ENCODE measurements at regions of chr2 and their contacts with region 1.

Region 1: GRCh38 chr2:119702918-119703401 is 24.0 kb downstream of the TMEM177 start:
- DNase-seq: peak; percentile 80
- H3K4me3 Mint-ChIP-seq: no peak overlapping the region
- H3K27ac Mint-ChIP-seq: no peak overlapping the region
- H3K4me1 Mint-ChIP-seq: peaks cover 19% of the 10 kb centered on the region
- H3K27me3 Mint-ChIP-seq: no peaks in the 10 kb centered on the region

Region 2: GRCh38 chr2:119641562-119642258 is 61.2 kb before region 1 on chr2:
- CTCF ChIA-PET with region 1: interaction called, 4 read pairs
- POLR2A ChIA-PET with region 1: no interaction called
- intact Hi-C with region 1: loop called (anchors 5 kb)
- DNase-seq: peak; percentile 84
- H3K4me3 Mint-ChIP-seq: no peak overlapping the region
- H3K27ac Mint-ChIP-seq: no peak overlapping the region
- H3K4me1 Mint-ChIP-seq: no peaks in the 10 kb centered on the region
- H3K27me3 Mint-ChIP-seq: peaks cover 3% of the 10 kb centered on the region

Region 3: DNA sequence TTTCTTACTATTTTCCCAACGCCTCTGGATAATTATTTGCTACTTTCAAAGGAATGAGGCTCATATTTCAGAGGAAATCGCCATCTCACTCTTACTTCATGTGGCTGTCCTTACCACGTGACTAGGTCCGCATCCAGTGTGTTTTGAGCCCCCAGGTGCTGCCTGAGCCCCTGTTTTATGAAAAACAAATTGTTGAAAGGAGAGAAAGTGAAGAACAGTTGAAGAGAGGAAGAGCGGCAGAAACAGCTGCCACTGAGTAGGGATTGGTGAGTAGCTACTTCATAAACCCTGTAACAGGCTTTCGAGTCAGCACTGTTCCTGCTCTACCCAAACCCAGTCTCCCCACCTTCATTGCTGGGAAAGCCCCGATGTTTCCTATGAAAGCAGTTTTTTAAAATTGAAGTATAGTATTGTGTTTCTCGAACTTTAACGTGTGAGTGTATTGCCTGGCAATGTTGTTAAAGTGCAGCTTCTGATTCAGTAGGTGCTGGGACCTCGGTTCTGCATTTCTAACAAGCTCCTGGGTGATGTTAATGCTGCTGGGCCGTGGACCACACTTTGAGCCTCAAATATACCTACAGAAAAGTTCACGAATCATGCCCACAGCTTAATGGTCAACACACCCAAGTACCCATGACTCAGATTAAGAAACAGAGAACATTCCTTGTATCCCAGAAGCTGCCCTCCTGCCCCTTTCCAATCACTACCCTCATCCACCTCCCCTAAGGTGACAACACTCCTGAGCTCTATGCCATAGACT is 15.7 kb after region 1 on chr2:
- CTCF ChIA-PET with region 1: interaction called, 4 read pairs
- POLR2A ChIA-PET with region 1: interaction called, 5 read pairs
- intact Hi-C with region 1: loop called (anchors 1 kb)
- DNase-seq: peak; percentile 33
- H3K4me3 Mint-ChIP-seq: no peak overlapping the region
- H3K27ac Mint-ChIP-seq: peak overlapping the region; percentile 61
- H3K4me1 Mint-ChIP-seq: peaks cover 14% of the 10 kb centered on the region
- H3K27me3 Mint-ChIP-seq: no peaks in the 10 kb centered on the region

Region 4: GRCh38 chr2:119826370-119826961 is 123.5 kb after region 1 on chr2:
- CTCF ChIA-PET with region 1: interaction called, 73 read pairs
- POLR2A ChIA-PET with region 1: interaction called, 4 read pairs
- intact Hi-C with region 1: loop called (anchors 1 kb)
- DNase-seq: peak; percentile 57
- H3K4me3 Mint-ChIP-seq: no peak overlapping the region
- H3K27ac Mint-ChIP-seq: no peak overlapping the region
- H3K4me1 Mint-ChIP-seq: peaks cover 42% of the 10 kb centered on the region
- H3K27me3 Mint-ChIP-seq: no peaks in the 10 kb centered on the region

Region 5: GRCh38 chr2:120012771-120013596 is 310.0 kb after region 1 on chr2 and contains the start of gene EPB41L5:
- CTCF ChIA-PET with region 1: interaction called, 4 read pairs
- POLR2A ChIA-PET with region 1: no interaction called
- intact Hi-C with region 1: loop called (anchors 5 kb)
- DNase-seq: peak; percentile 87
- H3K4me3 Mint-ChIP-seq: peak within 1 kb of the TSS; percentile 73
- H3K27ac Mint-ChIP-seq: no peak within 1 kb of the TSS
- H3K4me1 Mint-ChIP-seq: peaks cover 10% of the 10 kb centered on the region
- H3K27me3 Mint-ChIP-seq: peaks cover 1% of the 10 kb centered on the region
- total RNA-seq, gene EPB41L5: 2.5 to 2.7 TPM

Region 6: DNA sequence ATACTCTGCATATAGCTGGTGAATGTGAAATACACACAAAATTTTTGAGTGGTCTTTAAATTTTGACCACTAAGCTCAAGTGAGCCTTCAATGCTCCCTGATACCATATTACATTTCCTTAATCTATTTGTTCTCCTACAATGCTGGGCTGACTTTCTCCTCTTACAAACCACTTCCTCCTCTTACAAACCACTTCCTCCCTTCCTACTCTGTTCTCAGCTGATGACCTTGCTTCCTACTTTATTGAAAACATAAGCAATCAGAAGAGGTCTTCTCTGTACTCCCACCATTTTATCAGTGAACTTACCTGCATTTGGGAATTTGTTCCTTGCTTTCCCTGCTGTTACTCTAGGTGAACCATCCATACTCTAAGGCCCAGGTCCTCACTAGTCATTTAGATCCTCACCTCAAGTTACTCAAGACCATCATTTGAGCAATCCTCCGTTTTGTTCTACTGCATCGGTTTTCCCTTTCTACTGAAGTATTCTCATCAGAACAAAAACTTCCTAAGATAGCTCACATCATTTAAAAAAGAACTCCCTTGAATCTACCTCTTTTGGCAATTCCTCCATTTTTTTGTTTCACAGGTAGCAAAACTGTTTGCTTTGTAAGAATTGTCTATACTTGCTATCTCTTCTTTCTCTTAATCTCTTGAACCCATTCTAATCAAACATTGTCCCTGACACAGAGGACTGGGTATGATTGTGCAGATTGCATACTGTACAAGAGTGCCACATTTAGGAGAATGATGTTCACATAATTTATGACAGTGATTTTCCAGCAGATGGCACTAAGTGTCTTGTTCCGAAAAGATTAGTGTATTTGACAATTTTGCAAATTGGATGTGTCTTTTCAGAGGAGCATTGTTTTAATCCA is 406.5 kb after region 1 on chr2:
- CTCF ChIA-PET with region 1: interaction called, 3 read pairs
- POLR2A ChIA-PET with region 1: no interaction called
- intact Hi-C with region 1: loop called (anchors 2 kb)
- DNase-seq: no peak
- H3K4me3 Mint-ChIP-seq: no peak overlapping the region
- H3K27ac Mint-ChIP-seq: peak overlapping the region; percentile 42
- H3K4me1 Mint-ChIP-seq: peaks cover 17% of the 10 kb centered on the region
- H3K27me3 Mint-ChIP-seq: no peaks in the 10 kb centered on the region

Region 7: DNA sequence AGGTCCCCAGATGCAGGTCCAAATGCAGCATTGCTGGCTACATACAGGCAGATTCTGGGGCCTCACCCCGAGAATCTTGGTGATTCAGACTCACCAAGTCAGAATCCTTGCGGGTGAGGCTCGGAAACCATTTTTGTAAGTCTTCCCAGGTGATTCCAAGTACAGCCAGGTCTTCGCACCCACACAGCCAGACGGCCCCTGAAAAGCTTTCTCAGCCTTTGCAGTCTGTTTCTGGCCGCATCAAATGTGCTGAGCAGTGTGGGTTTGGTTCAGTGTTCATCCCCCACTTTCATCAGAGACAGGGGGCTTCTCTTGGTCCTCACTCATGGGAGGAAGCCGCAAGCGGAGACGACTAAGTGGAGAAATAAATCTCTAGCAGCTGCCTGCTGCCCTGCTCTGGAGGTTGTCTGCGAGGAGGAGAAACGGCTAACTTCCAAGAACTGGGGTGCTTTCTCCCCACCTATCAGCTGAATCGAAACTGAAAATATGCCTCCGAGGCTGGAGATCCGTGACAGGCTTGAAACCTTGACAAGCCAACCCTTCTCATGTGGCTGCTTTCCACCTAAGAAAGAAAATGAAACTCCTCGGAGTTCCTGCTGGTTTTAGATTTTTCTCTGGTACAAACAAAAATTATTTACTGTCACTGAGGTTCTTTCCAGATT is 529.1 kb after region 1 on chr2:
- CTCF ChIA-PET with region 1: no interaction called
- POLR2A ChIA-PET with region 1: no interaction called
- intact Hi-C with region 1: loop called (anchors 2 kb)
- DNase-seq: peak; percentile 85
- H3K4me3 Mint-ChIP-seq: peak overlapping the region; percentile 82
- H3K27ac Mint-ChIP-seq: peak overlapping the region; percentile 96
- H3K4me1 Mint-ChIP-seq: peaks cover 40% of the 10 kb centered on the region
- H3K27me3 Mint-ChIP-seq: no peaks in the 10 kb centered on the region